ENCODE measurements at regions of chr5 and their contacts with region 1.

Region 1: GRCh38 chr5:54310433-54311175 is at the start of gene ARL15:
- DNase-seq: peak; percentile 99
- ATAC-seq: peak; percentile 98
- H3K4me3 Mint-ChIP-seq: peak within 1 kb of the TSS; percentile 83
- H3K27ac Mint-ChIP-seq: peak within 1 kb of the TSS; percentile 81
- H3K4me1 Mint-ChIP-seq: peaks cover 27% of the 10 kb centered on the region
- H3K27me3 Mint-ChIP-seq: peaks cover 8% of the 10 kb centered on the region
- total RNA-seq, gene ARL15: 5.4 to 6.7 TPM

Region 2: GRCh38 chr5:53109443-53110127 is 1201.0 kb before region 1 on chr5 and contains the start of gene MOCS2:
- CTCF ChIA-PET with region 1: no interaction called
- POLR2A ChIA-PET with region 1: interaction called, 3 read pairs
- intact Hi-C with region 1: loop called in 1 of 2 experiments (anchors 1 kb)
- DNase-seq: peak; percentile 95
- ATAC-seq: peak; percentile 99
- H3K4me3 Mint-ChIP-seq: peak within 1 kb of the TSS; percentile 93
- H3K27ac Mint-ChIP-seq: peak within 1 kb of the TSS; percentile 94
- H3K4me1 Mint-ChIP-seq: peaks cover 44% of the 10 kb centered on the region
- H3K27me3 Mint-ChIP-seq: no peaks in the 10 kb centered on the region
- total RNA-seq, gene MOCS2: 21.0 to 21.3 TPM

Region 3: DNA sequence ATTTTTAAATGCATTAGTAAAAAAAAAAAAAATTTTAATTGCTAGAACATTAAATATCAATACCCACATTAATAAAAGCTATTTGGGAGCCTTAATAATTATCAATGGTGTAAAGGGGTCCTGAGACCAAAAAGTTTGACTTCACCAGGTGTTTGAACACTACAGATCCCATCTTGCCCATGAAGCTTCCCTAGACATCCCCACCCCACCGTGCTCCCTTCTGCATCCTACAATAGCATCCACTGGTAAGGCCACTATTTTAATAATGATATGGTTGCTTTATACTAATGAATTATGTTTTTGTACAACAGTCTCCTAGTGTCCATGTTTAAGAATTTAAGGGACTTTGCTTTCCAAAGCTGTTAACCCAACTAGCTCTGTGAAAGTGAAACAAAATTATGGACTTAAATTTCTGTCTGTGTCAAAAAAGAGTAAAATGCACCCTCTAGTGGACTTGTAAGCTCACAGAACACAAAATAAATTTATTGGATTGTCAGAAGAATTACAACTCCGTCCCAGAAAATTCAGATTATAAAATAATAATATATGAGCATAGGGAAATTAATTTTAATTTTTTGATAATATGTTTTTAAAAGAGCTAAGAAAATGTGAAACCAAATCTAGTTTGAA is 76.2 kb before region 1 on chr5:
- CTCF ChIA-PET with region 1: interaction called, 4 read pairs
- POLR2A ChIA-PET with region 1: interaction called, 12 read pairs
- intact Hi-C with region 1: no loop called
- DNase-seq: no peak
- ATAC-seq: no peak
- H3K4me3 Mint-ChIP-seq: no peak overlapping the region
- H3K27ac Mint-ChIP-seq: no peak overlapping the region
- H3K4me1 Mint-ChIP-seq: peaks cover 2% of the 10 kb centered on the region
- H3K27me3 Mint-ChIP-seq: no peaks in the 10 kb centered on the region

Region 4: DNA sequence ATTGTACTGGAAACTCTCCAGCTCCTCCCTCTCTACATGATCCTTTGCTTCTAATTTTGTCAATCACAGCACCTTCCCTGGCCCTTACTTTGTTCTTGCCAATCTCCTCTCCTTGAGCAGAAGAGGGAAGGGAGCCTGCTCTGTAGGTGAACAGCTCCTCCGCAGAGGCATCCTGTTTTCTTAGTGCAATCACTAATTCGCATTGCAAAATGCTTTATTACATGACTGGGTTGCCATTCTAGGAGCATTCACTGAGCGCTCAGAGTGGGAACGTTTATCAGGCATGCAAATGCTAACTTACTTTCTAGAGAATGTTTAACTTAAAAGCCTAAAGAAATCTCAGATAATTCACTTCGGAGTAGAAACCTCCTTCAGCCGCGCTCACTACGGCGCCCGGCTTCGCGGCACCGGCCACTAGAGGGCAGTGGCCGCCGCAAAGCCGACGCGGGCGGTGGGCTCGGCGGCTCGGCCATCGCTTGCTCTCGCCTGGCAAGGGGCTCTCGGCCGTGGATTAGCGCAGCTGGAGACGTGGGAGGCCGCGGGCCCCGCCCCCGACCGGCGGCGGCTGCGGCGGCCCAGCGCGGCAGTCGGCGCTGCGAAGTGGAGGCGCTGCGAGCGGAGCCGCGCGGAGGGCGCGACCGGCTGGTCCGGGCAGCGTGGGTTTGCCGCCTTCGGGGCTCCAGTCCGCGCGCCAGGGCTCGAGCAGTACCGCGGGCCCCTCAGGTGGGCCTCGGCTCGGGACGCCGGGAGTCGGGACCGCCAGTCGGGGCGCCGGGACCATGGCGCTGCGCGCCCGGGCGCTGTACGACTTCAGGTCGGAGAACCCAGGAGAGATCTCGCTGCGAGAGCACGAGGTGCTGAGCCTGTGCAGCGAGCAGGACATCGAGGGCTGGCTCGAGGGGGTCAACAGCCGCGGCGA is 206.8 kb after region 1 on chr5 and contains the start of gene SNX18:
- CTCF ChIA-PET with region 1: no interaction called
- POLR2A ChIA-PET with region 1: no interaction called
- intact Hi-C with region 1: loop called in 1 of 2 experiments (anchors 2 kb)
- DNase-seq: peak; percentile 95
- ATAC-seq: peak; percentile 77
- H3K4me3 Mint-ChIP-seq: peak within 1 kb of the TSS; percentile 71
- H3K27ac Mint-ChIP-seq: no peak within 1 kb of the TSS
- H3K4me1 Mint-ChIP-seq: peaks cover 40% of the 10 kb centered on the region
- H3K27me3 Mint-ChIP-seq: no peaks in the 10 kb centered on the region
- total RNA-seq, gene SNX18: 4.6 to 4.7 TPM

Region 5: DNA sequence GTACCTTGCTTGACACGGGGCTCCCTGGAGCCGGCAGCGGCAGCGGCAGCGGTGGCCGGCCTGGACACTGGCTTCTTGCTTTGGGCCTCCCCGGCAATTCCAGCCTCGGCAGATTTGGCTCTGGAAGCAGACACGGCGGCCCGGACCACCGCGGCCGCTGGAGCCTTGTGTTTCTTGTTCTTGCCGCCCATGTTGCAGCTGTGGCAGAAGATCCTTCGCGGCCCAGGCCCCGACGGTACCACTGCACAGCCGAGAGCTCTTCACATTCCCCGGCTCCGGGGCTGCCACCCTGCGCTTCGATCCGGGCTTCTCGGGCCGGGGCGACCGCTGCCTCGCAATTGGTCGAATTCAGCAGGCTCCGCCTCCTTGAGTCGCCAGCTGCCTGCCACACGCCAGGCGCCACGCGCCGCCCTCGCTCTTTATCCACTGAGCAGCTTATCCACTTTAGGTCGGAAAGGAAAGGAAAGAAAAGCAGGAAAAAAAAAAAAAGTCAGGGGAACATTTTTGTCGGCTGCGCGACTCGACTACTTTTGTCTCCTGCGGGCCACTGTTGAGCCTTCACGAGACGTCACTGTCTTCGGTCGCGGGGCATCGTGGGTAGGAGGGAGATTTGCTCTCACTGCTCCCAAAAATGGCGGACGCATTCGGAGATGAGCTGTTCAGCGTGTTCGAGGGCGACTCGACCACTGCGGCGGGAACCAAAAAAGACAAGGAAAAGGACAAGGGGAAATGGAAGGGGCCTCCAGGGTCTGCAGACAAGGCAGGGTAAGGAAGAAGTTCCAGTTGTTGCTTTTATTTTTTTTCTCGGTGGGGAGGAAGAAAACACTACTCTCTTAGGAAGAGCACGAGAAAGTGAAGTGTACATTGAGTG is 997.0 kb after region 1 on chr5 and contains the starts of genes DHX29 and MTREX:
- CTCF ChIA-PET with region 1: no interaction called
- POLR2A ChIA-PET with region 1: no interaction called
- intact Hi-C with region 1: loop called in 1 of 2 experiments (anchors 1 kb)
- DNase-seq: peak; percentile 93
- ATAC-seq: peak; percentile 94
- H3K4me3 Mint-ChIP-seq: no peak within 1 kb of the TSS
- H3K27ac Mint-ChIP-seq: no peak within 1 kb of the TSS
- H3K4me1 Mint-ChIP-seq: peaks cover 30% of the 10 kb centered on the region
- H3K27me3 Mint-ChIP-seq: no peaks in the 10 kb centered on the region
- total RNA-seq, gene DHX29: 12.1 to 12.9 TPM
- total RNA-seq, gene MTREX: 98.2 to 106 TPM

Measured in activated CD4-positive, alpha-beta T cell treated with anti-CD3 and anti-CD28 coated beads for 36 hours (primary cell).